ENCODE measurements at regions of chr15 and their contacts with region 1.

Region 1: GRCh38 chr15:73284090-73284716 is 84.6 kb downstream of the HCN4 start:
- DNase-seq: no peak
- ATAC-seq: no peak
- H3K4me3 Mint-ChIP-seq: no peak overlapping the region
- H3K27ac Mint-ChIP-seq: no peak overlapping the region
- H3K4me1 Mint-ChIP-seq: peaks cover 10% of the 10 kb centered on the region
- H3K27me3 Mint-ChIP-seq: no peaks in the 10 kb centered on the region

Region 2: DNA sequence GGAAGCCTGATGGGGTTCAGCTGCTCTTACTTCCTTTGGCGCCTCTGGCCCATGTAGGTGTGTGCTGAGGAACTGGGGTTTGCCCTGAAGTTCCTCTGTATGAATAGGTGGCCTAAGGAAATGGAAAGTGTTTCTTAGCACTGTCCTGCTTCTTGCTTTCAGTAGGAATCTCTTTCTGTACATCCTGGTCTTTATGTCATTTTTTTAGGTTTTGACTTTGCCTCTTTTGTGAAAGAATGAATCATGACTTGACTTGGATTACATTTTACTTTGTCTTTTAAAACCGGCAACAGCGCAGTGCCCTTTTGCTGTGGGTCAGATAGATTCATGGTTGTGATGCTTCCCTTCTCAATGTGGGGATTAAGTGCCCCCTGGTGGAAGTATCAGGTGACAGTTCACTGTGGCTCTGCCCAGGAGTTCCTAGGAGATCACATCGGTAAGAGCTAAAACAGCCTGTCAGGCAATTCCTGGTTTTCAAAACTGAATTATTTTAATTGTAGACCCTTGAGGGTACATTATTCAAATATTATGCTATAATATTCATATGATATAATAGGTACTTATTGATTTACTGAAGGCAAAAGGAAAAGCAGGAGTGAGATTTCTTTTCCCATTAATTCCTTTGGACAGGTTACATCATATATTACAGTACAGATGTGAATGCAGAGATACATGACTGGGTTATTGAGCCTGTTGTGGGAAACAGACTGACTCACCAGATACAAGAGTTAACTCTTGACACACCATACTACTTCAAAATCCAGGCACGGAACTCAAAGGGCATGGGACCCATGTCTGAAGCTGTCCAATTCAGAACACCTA is 10.8 kb before region 1 on chr15:
- CTCF ChIA-PET with region 1: interaction called, 25 read pairs
- POLR2A ChIA-PET with region 1: no interaction called
- intact Hi-C with region 1: no loop called
- DNase-seq: peak; percentile 64
- ATAC-seq: peak; percentile 90
- H3K4me3 Mint-ChIP-seq: no peak overlapping the region
- H3K27ac Mint-ChIP-seq: no peak overlapping the region
- H3K4me1 Mint-ChIP-seq: peaks cover 4% of the 10 kb centered on the region
- H3K27me3 Mint-ChIP-seq: no peaks in the 10 kb centered on the region

Measured in activated CD4-positive, alpha-beta T cell treated with anti-CD3 and anti-CD28 coated beads for 36 hours (primary cell).